ENCODE measurements at regions of chr5 and their contacts with region 1.

Region 1: GRCh38 chr5:144467792-144468191 is 297.1 kb downstream of the KCTD16 start:
- DNase-seq: peak; percentile 78
- H3K4me3 Mint-ChIP-seq: no peak overlapping the region
- H3K27ac Mint-ChIP-seq: no peak overlapping the region
- H3K4me1 Mint-ChIP-seq: no peaks in the 10 kb centered on the region
- H3K27me3 Mint-ChIP-seq: no peaks in the 10 kb centered on the region
- CTCF ChIP-seq: peak; percentile 82

Region 2: GRCh38 chr5:144453753-144454152 is 14.0 kb before region 1 on chr5:
- CTCF ChIA-PET with region 1: interaction called, 15 read pairs
- POLR2A ChIA-PET with region 1: no interaction called
- intact Hi-C with region 1: no loop called
- DNase-seq: no peak
- H3K4me3 Mint-ChIP-seq: no peak overlapping the region
- H3K27ac Mint-ChIP-seq: no peak overlapping the region
- H3K4me1 Mint-ChIP-seq: peaks cover 14% of the 10 kb centered on the region
- H3K27me3 Mint-ChIP-seq: no peaks in the 10 kb centered on the region
- CTCF ChIP-seq: no peak

Region 3: GRCh38 chr5:144697847-144698262 is 230.1 kb after region 1 on chr5:
- CTCF ChIA-PET with region 1: interaction called, 10 read pairs
- POLR2A ChIA-PET with region 1: no interaction called
- intact Hi-C with region 1: loop called (anchors 1 kb)
- DNase-seq: peak; percentile 88
- H3K4me3 Mint-ChIP-seq: no peak overlapping the region
- H3K27ac Mint-ChIP-seq: peak overlapping the region; percentile 73
- H3K4me1 Mint-ChIP-seq: peaks cover 19% of the 10 kb centered on the region
- H3K27me3 Mint-ChIP-seq: no peaks in the 10 kb centered on the region
- CTCF ChIP-seq: peak; percentile 18

Region 4: DNA sequence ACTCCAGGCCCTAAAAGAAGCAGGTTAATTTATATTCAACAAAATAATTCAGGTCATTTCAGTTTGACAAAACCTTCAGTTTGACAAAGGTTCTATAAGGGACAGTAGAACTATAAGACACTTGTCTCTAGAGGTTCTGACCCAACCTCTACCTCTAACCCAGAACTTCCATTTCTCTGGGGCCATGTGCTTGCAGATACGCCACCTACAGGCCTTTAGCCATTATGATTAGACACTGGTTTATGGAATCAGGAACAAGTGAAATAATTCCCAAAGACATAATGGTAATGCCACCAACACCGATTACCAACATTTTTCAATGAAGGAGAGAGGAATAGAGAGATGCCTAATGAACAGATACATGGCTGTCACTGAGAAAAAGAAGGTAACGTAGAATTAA is 633.5 kb after region 1 on chr5:
- CTCF ChIA-PET with region 1: interaction called, 4 read pairs
- POLR2A ChIA-PET with region 1: no interaction called
- intact Hi-C with region 1: loop called (anchors 2 kb)
- DNase-seq: peak; percentile 34
- H3K4me3 Mint-ChIP-seq: no peak overlapping the region
- H3K27ac Mint-ChIP-seq: no peak overlapping the region
- H3K4me1 Mint-ChIP-seq: no peaks in the 10 kb centered on the region
- H3K27me3 Mint-ChIP-seq: no peaks in the 10 kb centered on the region
- CTCF ChIP-seq: peak; percentile 55

Region 5: DNA sequence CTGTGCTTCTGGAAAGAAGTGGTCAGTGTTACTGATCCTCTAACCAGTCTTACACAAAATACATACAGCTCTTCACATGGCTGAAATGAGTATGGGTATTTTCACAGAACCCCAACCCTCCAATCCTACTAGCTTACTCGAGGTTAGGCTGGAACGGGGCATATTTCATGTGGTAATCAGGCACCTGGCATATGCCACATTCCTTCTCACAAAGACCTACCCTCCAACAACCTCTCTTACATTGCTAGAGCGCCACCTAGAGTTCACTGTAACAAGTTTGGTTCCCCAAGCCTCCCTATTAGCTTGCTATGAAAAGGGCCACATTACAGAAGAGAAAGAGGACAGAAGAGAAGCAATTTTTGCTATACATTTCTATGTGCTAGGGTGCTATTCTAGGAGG is 770.1 kb after region 1 on chr5:
- CTCF ChIA-PET with region 1: interaction called, 25 read pairs
- POLR2A ChIA-PET with region 1: no interaction called
- intact Hi-C with region 1: loop called (anchors 1 kb)
- DNase-seq: peak; percentile 90
- H3K4me3 Mint-ChIP-seq: no peak overlapping the region
- H3K27ac Mint-ChIP-seq: no peak overlapping the region
- H3K4me1 Mint-ChIP-seq: peaks cover 5% of the 10 kb centered on the region
- H3K27me3 Mint-ChIP-seq: no peaks in the 10 kb centered on the region
- CTCF ChIP-seq: peak; percentile 82